Activated T-helper 1 cell treated with anti-CD3 and anti-CD28 coated beads, Interleukin-12 subunit alpha, Interleukin-12 subunit beta, Interleukin-2, Interleukin-4 antibody, amounts not matched to agents 30 ng/mL and 10 ng/mL and 1 ng/mL, durations not matched to agents 14 hours and 24 hours and 36 hours (primary cell): ENCODE measurements at regions of chr5 and their contacts with region 1.

Region 1: GRCh38 chr5:32174011-32174870 is at the start of gene GOLPH3:
- DNase-seq: peak; percentile 93
- H3K4me3 Mint-ChIP-seq: peak within 1 kb of the TSS; percentile 99
- H3K27ac Mint-ChIP-seq: peak within 1 kb of the TSS; percentile 99
- H3K4me1 Mint-ChIP-seq: peaks cover 31% of the 10 kb centered on the region
- H3K27me3 Mint-ChIP-seq: peaks cover 4% of the 10 kb centered on the region
- total RNA-seq, gene GOLPH3: 85.1 and 91.3 TPM in 2 replicates

Region 2: DNA sequence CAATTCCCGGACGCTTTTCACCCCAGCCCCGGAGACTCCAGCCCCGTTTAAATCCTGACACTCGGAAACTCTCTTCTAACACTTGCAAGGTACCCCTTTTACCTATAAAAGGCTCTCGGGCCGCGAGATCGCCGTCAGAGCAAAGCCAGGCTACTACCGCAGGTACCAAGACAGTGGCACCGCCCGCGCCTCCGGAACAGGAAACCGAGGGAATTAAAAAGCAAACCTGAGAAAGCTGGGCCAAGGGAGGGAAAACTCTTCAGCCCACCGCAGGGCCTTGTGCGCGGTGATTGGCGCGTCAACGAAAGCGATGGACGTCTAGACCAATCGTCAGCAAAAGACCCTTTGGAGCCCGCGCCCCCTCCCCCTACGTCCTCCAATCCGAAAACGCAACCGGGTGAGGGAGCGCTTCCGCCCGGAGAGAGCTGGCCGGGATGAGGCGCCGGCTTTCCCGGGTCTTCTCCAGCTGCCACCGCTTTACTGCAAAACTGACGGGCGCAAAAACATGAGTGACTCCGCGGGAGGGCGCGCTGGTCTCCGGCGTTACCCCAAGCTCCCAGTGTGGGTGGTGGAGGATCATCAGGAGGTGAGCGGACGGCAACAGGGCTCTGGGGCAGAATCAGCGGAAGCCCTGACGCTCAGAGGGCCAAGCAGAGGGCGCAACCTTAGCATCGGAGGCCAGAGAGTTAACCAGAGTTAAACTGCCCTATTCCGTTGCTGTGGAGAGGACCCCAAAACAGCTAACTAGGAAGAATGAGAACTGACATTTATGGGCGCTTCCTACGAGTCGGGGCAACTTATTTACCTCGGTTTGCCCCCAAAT is 642.1 kb before region 1 on chr5 and contains the starts of genes C5orf22 and DROSHA:
- intact Hi-C with region 1: loop called (anchors 2 kb)
- DNase-seq: peak; percentile 89
- H3K4me3 Mint-ChIP-seq: peak within 1 kb of the TSS; percentile 100
- H3K27ac Mint-ChIP-seq: peak within 1 kb of the TSS; percentile 96
- H3K4me1 Mint-ChIP-seq: peaks cover 55% of the 10 kb centered on the region
- H3K27me3 Mint-ChIP-seq: no peaks in the 10 kb centered on the region
- total RNA-seq, gene C5orf22: 30.1 and 36.6 TPM in 2 replicates
- total RNA-seq, gene DROSHA: 74.0 and 87.6 TPM in 2 replicates

Region 3: GRCh38 chr5:32138839-32139493 is 35.3 kb before region 1 on chr5:
- intact Hi-C with region 1: loop called (anchors 2 kb)
- DNase-seq: no peak
- H3K4me3 Mint-ChIP-seq: no peak overlapping the region
- H3K27ac Mint-ChIP-seq: peak overlapping the region; percentile 86
- H3K4me1 Mint-ChIP-seq: peaks cover 14% of the 10 kb centered on the region
- H3K27me3 Mint-ChIP-seq: no peaks in the 10 kb centered on the region

Region 4: GRCh38 chr5:32232441-32233219 is 58.4 kb after region 1 on chr5:
- intact Hi-C with region 1: loop called (anchors 1 kb)
- DNase-seq: peak; percentile 61
- H3K4me3 Mint-ChIP-seq: no peak overlapping the region
- H3K27ac Mint-ChIP-seq: peak overlapping the region; percentile 47
- H3K4me1 Mint-ChIP-seq: peaks cover 26% of the 10 kb centered on the region
- H3K27me3 Mint-ChIP-seq: peaks cover 1% of the 10 kb centered on the region

Region 5: GRCh38 chr5:32312647-32313523 is 138.6 kb after region 1 on chr5 and contains the start of gene MTMR12:
- intact Hi-C with region 1: loop called (anchors 1 kb)
- DNase-seq: peak; percentile 100
- H3K4me3 Mint-ChIP-seq: peak within 1 kb of the TSS; percentile 96
- H3K27ac Mint-ChIP-seq: peak within 1 kb of the TSS; percentile 95
- H3K4me1 Mint-ChIP-seq: peaks cover 38% of the 10 kb centered on the region
- H3K27me3 Mint-ChIP-seq: no peaks in the 10 kb centered on the region
- total RNA-seq, gene MTMR12: 26.2 and 29.9 TPM in 2 replicates

Region 6: DNA sequence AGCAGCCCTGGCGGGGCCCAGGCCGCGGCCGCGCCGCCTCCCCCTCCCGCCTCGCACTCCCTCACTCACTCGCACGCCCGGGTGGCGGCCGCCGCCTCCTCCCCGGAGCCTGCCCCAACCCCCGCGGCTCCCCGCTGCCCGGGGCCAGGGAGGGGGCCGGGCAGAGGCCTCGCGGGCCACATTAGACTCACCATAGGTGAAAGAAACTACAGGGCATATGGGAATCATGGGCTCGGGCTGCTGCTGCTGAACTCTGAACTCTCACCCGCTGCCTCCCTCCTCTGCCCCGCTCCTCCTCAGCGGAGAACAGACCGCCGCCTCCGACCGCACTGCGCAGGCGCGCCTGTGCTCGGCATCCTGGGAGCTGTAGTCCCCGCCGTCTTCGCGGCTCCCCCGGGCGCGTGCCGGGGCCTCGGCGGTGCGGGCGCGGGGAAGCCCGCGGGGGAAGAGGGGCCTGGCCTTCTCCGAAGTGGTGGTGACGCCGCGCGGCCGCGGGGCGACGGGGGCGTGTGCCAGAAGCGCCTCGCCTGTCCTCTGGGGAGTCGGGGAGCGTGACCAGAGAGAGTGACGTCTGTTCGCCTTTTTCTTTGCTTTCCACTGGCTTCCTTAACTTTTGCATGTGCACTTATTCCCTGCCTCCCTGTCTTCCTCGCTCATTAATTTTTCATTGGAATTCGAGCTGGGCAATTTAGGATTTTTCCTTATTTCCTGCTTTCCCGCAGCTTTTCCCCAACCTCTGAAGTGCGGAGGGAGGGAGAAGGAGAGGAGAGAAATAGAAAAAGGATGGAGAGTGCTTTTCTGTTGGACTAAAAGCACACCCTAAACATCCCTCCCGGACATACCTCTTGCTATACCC is 270.4 kb after region 1 on chr5 and contains the start of gene ZFR:
- intact Hi-C with region 1: loop called (anchors 1 kb)
- DNase-seq: peak; percentile 94
- H3K4me3 Mint-ChIP-seq: peak within 1 kb of the TSS; percentile 97
- H3K27ac Mint-ChIP-seq: peak within 1 kb of the TSS; percentile 98
- H3K4me1 Mint-ChIP-seq: peaks cover 29% of the 10 kb centered on the region
- H3K27me3 Mint-ChIP-seq: peaks cover 12% of the 10 kb centered on the region
- total RNA-seq, gene ZFR: 67.7 and 70.8 TPM in 2 replicates

Region 7: GRCh38 chr5:32585446-32586275 is 411.4 kb after region 1 on chr5 and contains the start of gene SUB1:
- intact Hi-C with region 1: loop called (anchors 2 kb)
- DNase-seq: peak; percentile 91
- H3K4me3 Mint-ChIP-seq: peak within 1 kb of the TSS; percentile 94
- H3K27ac Mint-ChIP-seq: peak within 1 kb of the TSS; percentile 99
- H3K4me1 Mint-ChIP-seq: peaks cover 70% of the 10 kb centered on the region
- H3K27me3 Mint-ChIP-seq: no peaks in the 10 kb centered on the region
- total RNA-seq, gene SUB1: 408 and 428 TPM in 2 replicates